ENCODE measurements at regions of chr15 and their contacts with region 1.

Region 1: DNA sequence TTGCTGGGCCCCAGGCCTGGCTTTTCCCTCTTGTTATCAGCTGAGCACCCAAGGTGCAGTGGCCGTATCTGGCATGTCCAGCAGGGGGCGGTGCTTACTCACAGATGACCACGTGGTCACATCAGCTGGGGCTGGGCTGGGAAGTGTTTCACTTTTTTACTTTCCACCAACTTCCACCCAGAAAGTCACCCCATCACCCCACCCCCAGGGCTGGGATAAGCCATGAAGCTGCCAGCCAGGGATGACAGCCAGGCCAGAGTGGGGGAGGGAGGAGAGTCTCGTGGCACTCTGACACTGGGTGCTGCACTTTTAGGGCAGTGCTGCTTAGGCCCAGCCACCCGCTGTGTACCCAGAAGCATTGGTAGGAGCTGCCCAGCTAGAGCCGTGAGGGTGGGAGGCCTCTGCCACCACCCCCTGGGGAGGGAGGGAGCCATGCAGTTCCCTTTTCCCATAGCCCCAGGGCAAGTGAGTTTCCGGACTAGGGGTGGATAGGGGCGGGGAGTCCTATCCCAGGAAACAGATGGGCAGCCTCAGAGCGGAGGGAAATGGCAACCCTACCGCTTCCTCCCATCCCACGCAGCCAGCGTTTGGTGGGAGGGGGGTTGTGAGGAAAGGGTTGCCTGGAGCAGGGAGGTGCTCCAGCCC is 6.1 kb downstream of the PPCDC start:
- DNase-seq: peak; percentile 63
- H3K4me3 ChIP-seq: peak overlapping the region; percentile 41
- H3K27ac ChIP-seq: peak overlapping the region; percentile 52
- H3K27me3 ChIP-seq: no peaks in the 10 kb centered on the region
- CTCF ChIP-seq: peak; percentile 89

Region 2: DNA sequence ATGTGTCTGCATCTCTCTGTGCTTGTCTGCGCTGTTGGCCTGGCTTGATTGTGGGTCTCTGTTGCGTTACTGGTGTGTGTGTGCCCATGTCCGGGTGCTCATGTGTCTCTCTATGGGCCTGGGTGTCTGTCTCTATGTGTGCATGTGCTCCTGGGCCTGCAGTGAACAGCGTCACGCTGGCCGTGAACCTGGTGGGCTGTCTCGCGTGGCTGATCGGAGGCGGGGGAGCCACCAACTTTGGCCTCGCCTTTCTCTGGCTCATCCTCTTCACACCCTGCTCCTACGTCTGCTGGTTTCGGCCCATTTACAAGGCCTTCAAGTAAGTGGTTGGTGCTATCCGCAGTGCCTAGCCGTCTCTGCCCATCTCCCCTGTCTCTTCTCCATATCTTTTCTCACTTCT is 13.1 kb before region 1 on chr15:
- CTCF ChIA-PET with region 1: no interaction called
- POLR2A ChIA-PET with region 1: no interaction called
- DNase-seq: no peak
- H3K4me3 ChIP-seq: no peak overlapping the region
- H3K27ac ChIP-seq: no peak overlapping the region
- H3K27me3 ChIP-seq: peaks cover 20% of the 10 kb centered on the region
- CTCF ChIP-seq: no peak

Region 3: GRCh38 chr15:75042730-75043508 is 13.4 kb after region 1 on chr15:
- CTCF ChIA-PET with region 1: interaction called, 25 read pairs
- POLR2A ChIA-PET with region 1: interaction called, 10 read pairs
- DNase-seq: no peak
- H3K4me3 ChIP-seq: no peak overlapping the region
- H3K27ac ChIP-seq: peak overlapping the region; percentile 94
- H3K27me3 ChIP-seq: no peaks in the 10 kb centered on the region
- CTCF ChIP-seq: peak; percentile 35

Region 4: DNA sequence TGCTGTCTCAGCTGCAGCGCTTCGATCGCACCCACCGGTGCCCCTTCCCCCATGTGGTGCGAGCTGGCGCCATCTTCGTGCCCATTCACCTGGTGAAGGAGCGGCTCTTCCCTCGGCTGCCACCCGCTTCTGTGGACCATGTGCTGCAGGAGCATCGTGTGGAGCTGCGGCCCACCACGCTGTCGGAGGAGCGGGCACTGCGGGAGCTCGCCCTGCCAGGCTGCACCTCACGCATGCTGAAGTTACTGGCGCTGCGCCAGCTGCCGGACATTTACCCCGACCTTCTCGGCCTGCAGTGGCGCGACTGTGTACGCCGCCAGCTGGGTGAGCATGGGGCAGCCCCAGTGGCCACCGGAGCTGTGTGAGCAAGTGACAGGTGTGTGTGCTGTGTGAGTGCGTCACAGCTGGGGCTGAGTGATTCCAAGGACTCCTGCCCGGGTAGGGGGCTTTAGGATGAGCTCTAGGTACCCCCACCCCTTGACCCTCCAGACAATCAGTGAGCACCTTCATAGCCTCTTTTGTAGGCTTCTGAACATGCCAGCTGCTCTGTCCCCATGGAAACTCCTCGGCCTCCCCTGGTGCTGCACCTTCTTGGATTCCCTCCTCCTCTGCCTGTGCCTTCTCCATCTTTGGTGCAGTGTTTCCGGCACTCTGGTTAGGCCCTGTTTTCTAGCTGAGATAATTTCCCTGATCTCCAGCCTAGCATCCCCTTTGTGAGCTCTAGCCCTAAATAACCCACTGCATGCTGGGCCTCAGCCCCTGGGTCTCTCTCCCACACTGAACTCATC is 179.2 kb after region 1 on chr15:
- CTCF ChIA-PET with region 1: interaction called, 63 read pairs
- POLR2A ChIA-PET with region 1: interaction called, 3 read pairs
- DNase-seq: no peak
- H3K4me3 ChIP-seq: no peak overlapping the region
- H3K27ac ChIP-seq: no peak overlapping the region
- H3K27me3 ChIP-seq: no peaks in the 10 kb centered on the region
- CTCF ChIP-seq: no peak

Region 5: DNA sequence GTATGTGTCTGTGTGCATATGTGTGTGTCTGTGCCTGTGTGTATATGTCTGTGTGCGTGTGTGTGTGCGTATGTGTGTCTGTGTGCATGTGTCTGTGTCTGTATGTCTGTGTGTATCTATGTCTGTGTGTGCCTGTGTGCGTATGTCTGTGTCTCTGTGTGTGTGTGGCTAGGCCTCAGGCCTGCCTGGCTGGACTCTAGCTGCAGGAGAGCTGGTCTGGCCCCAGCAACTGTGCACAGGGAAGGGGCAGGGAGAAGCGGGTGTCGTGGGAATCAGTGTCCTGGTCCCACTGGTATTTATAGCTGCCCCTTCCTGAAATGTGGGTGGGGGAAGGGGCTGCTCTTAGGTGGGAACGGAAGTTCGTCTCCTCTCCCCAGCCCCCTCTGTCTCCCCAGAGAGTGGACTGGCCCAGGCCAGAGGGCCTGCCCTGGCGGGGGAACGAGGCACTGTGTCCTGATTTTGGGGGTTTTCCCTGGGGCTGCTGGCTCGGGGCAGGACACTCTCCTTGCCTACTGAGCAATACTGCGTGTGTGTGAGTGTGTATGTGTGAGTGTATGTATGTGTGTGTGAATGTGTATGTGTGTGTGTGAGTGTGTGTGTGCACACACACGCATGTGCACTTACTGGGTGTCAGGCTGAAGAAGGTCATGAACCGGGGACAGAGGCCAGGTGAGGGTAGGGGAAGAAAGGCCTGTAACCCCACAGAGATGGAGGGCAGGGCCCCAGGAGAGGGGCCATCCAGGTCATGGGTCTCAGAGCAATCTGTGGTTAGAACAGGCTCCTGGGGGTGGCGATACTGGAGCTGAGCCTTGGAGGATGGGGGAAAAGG is 676.6 kb after region 1 on chr15:
- CTCF ChIA-PET with region 1: no interaction called
- POLR2A ChIA-PET with region 1: no interaction called
- DNase-seq: no peak
- H3K4me3 ChIP-seq: no peak overlapping the region
- H3K27ac ChIP-seq: no peak overlapping the region
- H3K27me3 ChIP-seq: no peaks in the 10 kb centered on the region
- CTCF ChIP-seq: no peak